A673 (cell line): ENCODE measurements at regions of chr17 and their contacts with region 1.

Region 1: DNA sequence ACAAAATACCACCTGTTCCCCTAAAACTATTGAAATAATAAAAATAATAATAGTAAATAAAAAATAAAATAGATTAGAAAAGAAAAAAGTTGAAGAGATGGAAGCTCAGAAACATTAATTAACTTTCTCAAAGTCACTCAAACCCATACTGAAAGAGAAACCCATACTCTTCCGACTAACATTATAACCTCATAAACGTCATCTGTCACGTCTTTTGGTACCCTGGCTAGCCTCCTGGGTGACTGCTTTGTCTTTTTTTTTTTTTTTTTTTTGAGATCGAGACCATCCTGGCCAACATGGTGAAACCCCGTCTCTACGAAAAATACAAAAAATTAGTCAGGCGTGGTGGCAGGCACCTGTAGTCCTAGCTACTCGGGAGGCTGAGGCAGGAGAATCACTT is 7.6 kb downstream of the SLFN12L start:
- DNase-seq: no peak
- H3K4me3 ChIP-seq: no peak overlapping the region
- H3K27ac ChIP-seq: no peak overlapping the region
- H3K4me1 ChIP-seq: peaks cover 11% of the 10 kb centered on the region
- H3K27me3 ChIP-seq: no peaks in the 10 kb centered on the region
- CTCF ChIP-seq: no peak

Region 2: DNA sequence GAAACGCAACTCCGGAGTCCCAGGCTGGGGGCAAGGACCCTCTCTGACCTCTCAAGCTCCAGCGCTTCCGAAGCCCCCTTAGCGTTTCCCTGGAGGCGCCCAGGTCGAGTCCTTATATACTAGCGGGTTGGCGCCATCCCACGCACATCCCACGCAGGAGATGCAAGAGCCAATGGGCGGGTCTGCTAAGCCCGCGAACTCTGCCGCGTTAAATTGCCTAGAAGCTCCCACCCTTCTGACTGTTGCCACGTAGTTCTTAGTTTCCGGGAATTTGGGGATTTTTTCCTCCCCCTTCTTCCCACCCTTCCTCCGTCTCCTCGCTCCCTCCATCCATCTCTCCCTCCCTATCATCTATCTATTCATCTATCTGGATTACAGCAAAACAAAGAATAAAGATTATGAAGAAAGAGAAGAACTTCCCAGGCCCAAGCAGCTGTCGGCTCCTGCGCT is 156.3 kb before region 1 on chr17 and contains the start of gene SLFN11:
- CTCF ChIA-PET with region 1: no interaction called
- POLR2A ChIA-PET with region 1: interaction called, 3 read pairs
- intact Hi-C with region 1: loop called (anchors 5 kb)
- DNase-seq: peak; percentile 93
- H3K4me3 ChIP-seq: peak within 1 kb of the TSS; percentile 75
- H3K27ac ChIP-seq: peak within 1 kb of the TSS; percentile 98
- H3K4me1 ChIP-seq: peaks cover 6% of the 10 kb centered on the region
- H3K27me3 ChIP-seq: no peaks in the 10 kb centered on the region
- CTCF ChIP-seq: no peak
- total RNA-seq, gene SLFN11: 132 and 141 TPM in 2 replicates

Region 3: DNA sequence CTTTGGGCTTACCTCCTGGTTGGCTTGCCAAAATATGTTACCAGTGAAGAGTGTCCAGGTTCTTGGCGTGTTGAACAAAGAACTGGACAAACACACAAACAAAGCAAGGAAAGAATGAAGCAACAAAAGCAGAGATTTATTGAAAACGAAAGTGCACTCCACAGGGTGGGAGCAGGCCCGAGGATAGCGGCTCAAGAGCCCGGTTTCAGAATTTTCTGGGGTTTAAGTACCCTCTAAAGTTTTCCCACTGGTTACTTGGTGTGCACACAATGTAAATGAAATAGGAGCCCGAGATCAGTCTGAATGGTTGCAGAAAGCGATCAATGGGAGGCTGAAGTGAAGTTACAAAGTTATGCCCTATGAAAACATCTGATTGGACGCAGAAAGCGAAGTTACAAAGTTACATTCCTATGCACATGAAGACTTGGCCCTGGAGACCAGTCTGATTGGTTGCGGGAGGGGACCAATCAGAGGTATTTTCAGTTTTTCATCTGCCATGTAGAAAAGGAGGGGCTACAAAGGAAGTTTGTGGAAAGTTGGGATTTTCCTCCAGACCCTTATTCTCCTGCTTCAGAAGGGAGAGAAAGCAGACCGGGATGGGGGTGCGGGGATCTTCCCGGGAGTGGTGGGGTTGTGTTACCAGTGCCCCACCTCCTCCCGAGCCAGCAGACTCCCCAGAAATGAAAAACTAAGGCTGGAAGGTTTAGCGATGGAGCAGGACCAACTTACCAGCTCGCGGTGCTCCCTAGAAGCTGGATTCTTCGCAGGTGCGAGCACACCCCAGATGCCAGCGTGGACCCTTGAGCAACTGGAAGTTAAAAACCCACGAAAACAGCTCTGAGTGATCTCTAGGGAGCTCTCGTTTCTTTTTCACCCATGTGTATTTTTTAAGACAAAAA is 97.4 kb before region 1 on chr17 and contains the start of gene SLFN12:
- CTCF ChIA-PET with region 1: no interaction called
- POLR2A ChIA-PET with region 1: no interaction called
- intact Hi-C with region 1: loop called (anchors 5 kb)
- DNase-seq: peak; percentile 80
- H3K4me3 ChIP-seq: peak within 1 kb of the TSS; percentile 48
- H3K27ac ChIP-seq: peak within 1 kb of the TSS; percentile 76
- H3K4me1 ChIP-seq: peaks cover 10% of the 10 kb centered on the region
- H3K27me3 ChIP-seq: no peaks in the 10 kb centered on the region
- CTCF ChIP-seq: no peak
- total RNA-seq, gene SLFN12: 8.1 and 13.2 TPM in 2 replicates